ENCODE measurements at regions of chr2 and their contacts with region 1.

Region 1: GRCh38 chr2:65056215-65057053 is at the start of gene CEP68:
- DNase-seq: peak; percentile 98
- H3K4me3 Mint-ChIP-seq: peak within 1 kb of the TSS; percentile 93
- H3K27ac Mint-ChIP-seq: peak within 1 kb of the TSS; percentile 67
- H3K4me1 Mint-ChIP-seq: peaks cover 51% of the 10 kb centered on the region
- H3K27me3 Mint-ChIP-seq: no peaks in the 10 kb centered on the region
- total RNA-seq, gene CEP68: 6.0 to 7.3 TPM

Region 2: DNA sequence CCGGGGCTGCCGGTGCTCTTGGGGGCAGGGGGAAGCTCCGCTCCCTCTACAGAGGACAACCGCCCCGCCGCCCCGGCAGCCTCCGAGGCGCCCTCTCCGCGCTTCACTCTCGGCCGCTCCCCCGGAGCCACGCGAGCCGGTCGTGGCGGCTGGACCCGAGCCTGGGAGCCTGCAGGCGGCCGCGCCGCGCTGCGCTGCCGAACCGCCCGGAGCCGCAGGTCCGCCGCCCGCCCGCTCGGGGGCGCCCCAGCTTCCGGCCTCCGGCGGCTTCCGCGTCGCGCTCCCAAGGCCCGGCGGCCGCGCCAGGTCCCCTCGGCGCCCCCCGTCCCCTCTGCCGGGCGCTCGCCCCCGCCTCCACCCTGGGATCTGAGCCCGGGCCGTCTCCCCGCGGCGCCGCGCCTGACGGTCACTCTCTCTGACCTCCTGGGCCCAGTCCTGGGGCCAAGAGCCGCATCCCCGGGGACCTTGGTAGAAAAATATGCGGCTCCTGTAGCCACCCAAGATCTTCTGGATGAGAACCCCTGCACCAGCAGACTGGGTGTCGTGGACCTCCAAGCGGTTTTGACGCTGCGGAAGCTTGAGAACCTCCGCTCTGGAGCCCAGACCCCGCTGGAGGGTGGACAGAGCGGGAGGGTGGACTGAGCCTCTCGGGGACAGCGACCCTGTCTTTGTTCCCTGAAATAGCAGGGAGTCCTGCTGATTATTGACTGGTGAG is 447.1 kb before region 1 on chr2:
- CTCF ChIA-PET with region 1: no interaction called
- intact Hi-C with region 1: loop called (anchors 2 kb)
- DNase-seq: peak; percentile 62
- H3K4me3 Mint-ChIP-seq: peak overlapping the region; percentile 65
- H3K27ac Mint-ChIP-seq: no peak overlapping the region
- H3K4me1 Mint-ChIP-seq: peaks cover 24% of the 10 kb centered on the region
- H3K27me3 Mint-ChIP-seq: no peaks in the 10 kb centered on the region

Region 3: DNA sequence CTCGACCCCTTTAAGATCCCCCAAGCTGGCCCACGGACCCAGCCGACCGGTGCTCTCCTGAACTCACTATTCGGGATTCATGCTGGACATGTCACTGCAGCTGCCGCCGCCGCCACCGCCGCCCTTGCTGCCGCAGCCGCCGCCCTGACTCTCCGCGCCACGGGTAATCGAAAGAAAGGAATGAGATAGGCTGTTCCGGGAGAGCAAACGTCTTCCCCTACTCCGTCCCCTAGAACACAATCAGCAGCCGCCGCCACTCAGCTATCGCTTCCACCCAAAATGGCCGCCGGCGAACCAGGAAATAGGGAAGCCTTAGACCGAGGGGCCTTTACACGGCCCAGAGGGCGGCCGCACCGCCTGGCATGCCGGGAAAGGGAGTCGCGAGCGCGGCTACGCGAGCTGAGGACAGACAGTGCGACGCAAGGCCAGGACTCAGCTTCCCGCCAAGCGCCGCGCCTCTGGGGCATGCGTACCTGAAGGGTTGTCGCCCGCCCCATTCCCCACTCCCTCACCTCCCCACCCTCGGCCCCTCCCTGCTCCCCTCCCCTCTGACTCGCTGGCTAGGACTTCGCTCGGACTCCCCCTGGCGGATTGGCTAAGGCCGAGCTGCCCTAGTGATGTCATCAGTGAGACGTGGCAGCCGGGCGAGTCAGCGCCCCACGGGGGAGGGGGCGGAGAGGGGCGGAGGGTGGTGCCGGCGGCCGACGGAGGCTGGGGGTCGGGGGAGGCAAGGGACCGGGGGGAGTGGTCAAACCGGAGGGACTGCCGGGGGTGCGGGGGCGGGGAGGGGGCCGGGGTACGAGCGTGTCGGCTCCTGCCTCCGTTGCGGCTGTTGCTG is 73.6 kb after region 1 on chr2 and contains the start of gene RAB1A:
- CTCF ChIA-PET with region 1: interaction called, 3 read pairs
- intact Hi-C with region 1: loop called (anchors 1 kb)
- DNase-seq: peak; percentile 100
- H3K4me3 Mint-ChIP-seq: peak within 1 kb of the TSS; percentile 95
- H3K27ac Mint-ChIP-seq: peak within 1 kb of the TSS; percentile 94
- H3K4me1 Mint-ChIP-seq: peaks cover 35% of the 10 kb centered on the region
- H3K27me3 Mint-ChIP-seq: no peaks in the 10 kb centered on the region
- total RNA-seq, gene RAB1A: 60.8 to 61.3 TPM

Region 4: GRCh38 chr2:65169760-65170136 is 113.3 kb after region 1 on chr2:
- CTCF ChIA-PET with region 1: interaction called, 63 read pairs
- intact Hi-C with region 1: no loop called
- DNase-seq: no peak
- H3K4me3 Mint-ChIP-seq: no peak overlapping the region
- H3K27ac Mint-ChIP-seq: no peak overlapping the region
- H3K4me1 Mint-ChIP-seq: no peaks in the 10 kb centered on the region
- H3K27me3 Mint-ChIP-seq: no peaks in the 10 kb centered on the region

Region 5: GRCh38 chr2:65186872-65187851 is 130.7 kb after region 1 on chr2:
- CTCF ChIA-PET with region 1: interaction called, 10 read pairs
- intact Hi-C with region 1: no loop called
- DNase-seq: peak; percentile 81
- H3K4me3 Mint-ChIP-seq: no peak overlapping the region
- H3K27ac Mint-ChIP-seq: no peak overlapping the region
- H3K4me1 Mint-ChIP-seq: peaks cover 4% of the 10 kb centered on the region
- H3K27me3 Mint-ChIP-seq: peaks cover 5% of the 10 kb centered on the region

Region 6: DNA sequence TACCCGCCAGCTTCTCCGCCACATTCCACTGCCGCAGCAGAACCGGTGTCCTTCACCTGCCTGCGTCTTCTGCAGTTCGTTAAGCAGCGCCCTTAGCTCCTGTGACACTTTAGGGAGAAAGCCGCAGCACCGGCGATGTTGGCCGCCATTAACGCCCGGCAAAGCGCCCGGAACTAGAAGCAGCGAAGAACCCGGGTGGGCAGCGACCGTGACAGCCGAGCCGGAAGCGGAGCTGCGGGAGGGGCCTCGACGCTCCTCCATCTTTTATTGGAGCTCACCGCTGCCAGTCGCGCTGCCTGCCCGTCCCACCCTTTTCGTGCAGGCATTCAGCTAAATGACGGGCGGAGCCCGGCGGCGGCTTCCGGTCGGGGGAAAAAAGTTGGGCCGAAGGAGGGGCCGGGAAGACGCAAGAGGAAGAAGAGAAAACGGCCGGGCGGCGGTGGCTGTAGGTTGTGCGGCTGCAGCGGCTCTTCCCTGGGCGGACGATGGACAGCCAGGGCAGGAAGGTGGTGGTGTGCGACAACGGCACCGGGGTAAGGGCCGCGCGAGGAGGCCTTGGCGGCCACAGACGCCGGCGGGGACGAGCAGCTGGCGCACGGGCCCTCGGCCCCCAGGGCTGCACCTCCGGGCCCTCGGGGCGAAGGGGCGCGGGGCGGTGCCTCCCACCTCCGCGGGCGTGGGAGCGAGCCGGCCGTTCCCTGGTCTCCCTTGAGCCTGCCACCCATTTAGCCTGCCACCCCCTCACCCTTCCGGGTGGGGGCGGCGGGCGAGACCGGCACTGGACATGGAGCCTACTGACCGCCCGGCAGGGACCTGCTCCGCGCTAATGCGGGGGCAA is 171.2 kb after region 1 on chr2 and contains the start of gene ACTR2:
- CTCF ChIA-PET with region 1: no interaction called
- intact Hi-C with region 1: loop called (anchors 1 kb)
- DNase-seq: peak; percentile 96
- H3K4me3 Mint-ChIP-seq: peak within 1 kb of the TSS; percentile 98
- H3K27ac Mint-ChIP-seq: peak within 1 kb of the TSS; percentile 99
- H3K4me1 Mint-ChIP-seq: peaks cover 41% of the 10 kb centered on the region
- H3K27me3 Mint-ChIP-seq: no peaks in the 10 kb centered on the region
- total RNA-seq, gene ACTR2: 358 to 366 TPM

Region 7: GRCh38 chr2:65605743-65606058 is 549.3 kb after region 1 on chr2:
- CTCF ChIA-PET with region 1: no interaction called
- intact Hi-C with region 1: loop called (anchors 1 kb)
- DNase-seq: no peak
- H3K4me3 Mint-ChIP-seq: no peak overlapping the region
- H3K27ac Mint-ChIP-seq: peak overlapping the region; percentile 57
- H3K4me1 Mint-ChIP-seq: peaks cover 19% of the 10 kb centered on the region
- H3K27me3 Mint-ChIP-seq: no peaks in the 10 kb centered on the region